SK-N-SH (cell line): ENCODE measurements at regions of chr2 and their contacts with region 1.

Region 1: DNA sequence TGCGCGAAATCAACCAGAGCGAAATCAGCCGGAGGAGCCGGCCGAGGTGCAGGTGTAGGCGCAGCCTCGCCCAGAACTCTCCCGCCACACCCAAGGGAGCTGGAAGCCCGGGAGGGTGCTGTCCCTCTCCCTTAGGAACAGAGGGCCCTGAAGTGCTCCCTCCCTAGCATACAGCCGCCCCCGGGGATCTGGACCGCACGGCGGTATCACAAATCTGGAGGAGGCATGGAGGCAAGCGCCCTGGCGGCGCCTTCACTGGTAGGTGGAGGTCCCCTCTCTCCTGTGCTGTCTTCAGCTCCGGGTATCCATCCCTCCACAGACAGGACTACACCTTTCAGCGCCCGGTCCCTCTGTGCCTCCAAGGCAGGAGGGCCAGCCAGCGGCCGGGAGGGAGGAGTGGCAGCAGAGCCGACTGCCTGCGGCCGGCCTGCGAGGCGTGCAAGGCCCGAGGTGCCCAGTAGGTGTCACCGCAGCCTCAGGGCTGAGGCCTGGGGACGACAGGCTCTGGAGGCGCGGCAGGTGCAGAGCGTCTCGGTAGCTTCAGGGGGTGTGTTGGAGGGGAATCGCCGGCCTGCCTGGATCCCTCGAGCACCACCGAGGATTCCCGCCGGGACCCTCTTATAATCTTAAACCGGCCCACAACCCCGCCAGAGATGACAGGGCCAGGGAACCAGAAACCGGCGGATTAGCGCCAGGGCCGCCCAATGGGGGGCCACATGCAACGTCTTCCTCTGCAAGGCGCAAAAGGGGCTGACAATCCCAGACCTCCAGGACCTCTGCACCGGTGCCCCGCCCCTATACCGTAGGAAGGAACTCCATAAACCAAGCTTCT is 2.8 kb downstream of the IHH start:
- DNase-seq: peak; percentile 86
- H3K4me3 ChIP-seq: peak overlapping the region in 1 of 2 experiments; percentile 35; a peak in 1 of 4 replicates
- H3K27ac ChIP-seq: no peak overlapping the region
- H3K4me1 ChIP-seq: peaks cover 0 to 16% of the 10 kb centered on the region in 2 experiments; a peak in 1 of 4 replicates
- H3K27me3 ChIP-seq: peaks cover 43% of the 10 kb centered on the region
- CTCF ChIP-seq: peak; percentile 78
- EP300 ChIP-seq: no peak
- RAD21 ChIP-seq: peak; percentile 77

Region 2: GRCh38 chr2:219041252-219041651 is 16.7 kb before region 1 on chr2 and contains the start of gene CFAP65:
- CTCF ChIA-PET with region 1: interaction called, 33 read pairs
- POLR2A ChIA-PET with region 1: no interaction called
- DNase-seq: peak; percentile 84
- H3K4me3 ChIP-seq: peak within 1 kb of the TSS; percentile 74 to 78
- H3K27ac ChIP-seq: no peak within 1 kb of the TSS
- H3K4me1 ChIP-seq: peaks cover 4 to 6% of the 10 kb centered on the region in 2 experiments; a peak in 1 of 4 replicates
- H3K27me3 ChIP-seq: no peaks in the 10 kb centered on the region
- CTCF ChIP-seq: no peak
- EP300 ChIP-seq: 0 out of 4 replicates have a peak, but pooled peaks of 1 of the 2 experiments have one; percentile 19
- RAD21 ChIP-seq: no peak
- polyA plus RNA-seq, gene CFAP65: 0.95 and 1.7 TPM in 2 replicates

Region 3: GRCh38 chr2:219073413-219074129 is 15.6 kb after region 1 on chr2:
- CTCF ChIA-PET with region 1: interaction called, 99 read pairs
- POLR2A ChIA-PET with region 1: no interaction called
- DNase-seq: peak; percentile 68
- H3K4me3 ChIP-seq: no peak overlapping the region
- H3K27ac ChIP-seq: no peak overlapping the region
- H3K4me1 ChIP-seq: no peaks in the 10 kb centered on the region
- H3K27me3 ChIP-seq: no peaks in the 10 kb centered on the region
- CTCF ChIP-seq: peak; percentile 63
- EP300 ChIP-seq: no peak
- RAD21 ChIP-seq: peak; percentile 59

Region 4: DNA sequence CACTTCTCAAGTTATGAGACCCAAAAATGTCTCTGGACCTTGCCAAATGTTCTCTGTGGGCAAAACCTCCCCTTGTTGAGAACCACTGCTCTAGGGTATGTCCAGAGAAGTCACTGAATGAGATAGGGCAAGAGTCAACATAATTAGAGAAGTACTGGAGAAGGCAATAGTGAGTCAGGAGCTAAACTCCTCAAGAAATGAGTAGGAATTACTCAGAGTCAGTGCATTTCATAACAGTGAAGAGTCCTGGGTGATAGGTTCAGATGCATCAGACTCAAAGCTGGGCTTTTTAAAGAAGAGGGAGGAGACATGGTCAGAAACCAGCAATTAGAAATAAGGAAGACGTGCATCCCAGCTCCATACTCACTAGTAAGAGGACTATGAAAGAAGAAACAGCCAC is 41.4 kb after region 1 on chr2:
- CTCF ChIA-PET with region 1: interaction called, 39 read pairs
- POLR2A ChIA-PET with region 1: no interaction called
- DNase-seq: no peak
- H3K4me3 ChIP-seq: no peak overlapping the region
- H3K27ac ChIP-seq: no peak overlapping the region
- H3K4me1 ChIP-seq: no peaks in the 10 kb centered on the region
- H3K27me3 ChIP-seq: no peaks in the 10 kb centered on the region
- CTCF ChIP-seq: no peak
- EP300 ChIP-seq: no peak
- RAD21 ChIP-seq: no peak

Region 5: DNA sequence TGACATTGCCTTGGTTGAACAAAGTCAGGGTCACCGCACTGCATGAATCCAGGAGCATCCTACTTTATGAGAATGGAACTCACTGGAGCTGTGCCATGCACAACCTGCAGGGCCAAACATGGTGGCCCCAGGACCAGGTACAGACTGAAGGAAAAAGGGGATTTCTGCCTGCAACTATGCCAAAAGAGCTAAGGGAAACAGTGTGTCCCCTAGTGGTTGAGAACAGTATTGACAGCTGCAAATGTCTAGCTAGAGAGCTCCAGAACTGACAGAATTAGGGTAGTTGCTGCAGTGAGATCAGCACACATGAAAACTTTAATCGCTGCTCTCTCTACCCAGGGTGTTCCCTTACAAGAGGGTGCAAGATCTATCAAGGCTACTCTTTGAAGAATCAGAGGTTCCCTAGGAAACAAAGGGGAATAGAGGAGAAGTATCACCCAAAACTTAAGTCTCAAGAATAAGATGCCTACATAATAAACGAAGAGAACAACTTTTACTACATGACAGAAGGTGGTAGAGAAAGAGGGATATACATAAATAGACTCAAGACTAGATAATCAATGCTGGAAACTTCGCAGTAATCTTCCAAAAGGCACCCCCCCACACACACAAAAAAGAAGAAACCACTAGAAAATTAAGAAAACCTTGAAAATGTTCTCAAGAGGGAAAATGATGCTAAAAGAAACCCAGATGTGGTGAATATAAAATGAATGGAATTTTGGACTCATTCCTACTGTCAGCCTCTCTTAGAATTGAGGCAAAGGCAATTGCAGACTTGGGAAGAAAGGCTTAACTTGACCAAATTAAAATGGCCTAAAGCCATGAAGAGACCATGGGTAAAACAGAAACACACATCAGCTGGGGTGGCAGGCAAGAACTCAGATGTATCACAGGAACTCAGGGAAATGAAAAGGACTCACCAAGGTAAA is 46.4 kb after region 1 on chr2:
- CTCF ChIA-PET with region 1: interaction called, 39 read pairs
- POLR2A ChIA-PET with region 1: no interaction called
- DNase-seq: peak; percentile 66
- H3K4me3 ChIP-seq: no peak overlapping the region; a peak in 1 of 4 replicates
- H3K27ac ChIP-seq: no peak overlapping the region
- H3K4me1 ChIP-seq: no peaks in the 10 kb centered on the region
- H3K27me3 ChIP-seq: no peaks in the 10 kb centered on the region
- CTCF ChIP-seq: peak; percentile 71
- EP300 ChIP-seq: no peak
- RAD21 ChIP-seq: peak; percentile 70

Region 6: DNA sequence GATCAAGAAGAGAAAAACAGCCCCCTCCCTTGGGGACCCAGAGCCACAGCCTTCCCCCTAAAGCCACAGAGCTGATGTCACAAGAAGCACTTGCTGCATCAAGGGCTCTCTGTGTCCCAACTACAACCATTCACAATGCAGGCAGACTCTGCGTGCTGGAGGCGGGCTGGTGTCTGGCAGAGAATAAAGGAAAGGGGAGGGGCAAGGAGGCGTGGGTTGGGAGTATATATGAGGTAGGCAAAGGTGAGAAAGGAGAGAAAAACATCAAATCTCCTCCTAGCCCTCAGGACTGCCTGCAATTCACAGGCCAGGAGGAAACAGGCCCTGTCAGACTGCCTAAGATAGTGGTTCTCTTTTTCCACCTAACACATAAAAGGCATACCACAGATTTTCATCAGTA is 51.5 kb after region 1 on chr2:
- CTCF ChIA-PET with region 1: interaction called, 177 read pairs
- POLR2A ChIA-PET with region 1: no interaction called
- DNase-seq: no peak
- H3K4me3 ChIP-seq: no peak overlapping the region
- H3K27ac ChIP-seq: no peak overlapping the region
- H3K4me1 ChIP-seq: no peaks in the 10 kb centered on the region
- H3K27me3 ChIP-seq: no peaks in the 10 kb centered on the region
- CTCF ChIP-seq: no peak
- EP300 ChIP-seq: no peak
- RAD21 ChIP-seq: no peak